ENCODE measurements at regions of chr4 and their contacts with region 1.

Region 1: GRCh38 chr4:22897520-22898108 is 204.9 kb downstream of the GBA3 start:
- DNase-seq: peak; percentile 30
- H3K4me3 ChIP-seq: no peak overlapping the region; a peak in 1 of 4 replicates
- H3K27ac ChIP-seq: no peak overlapping the region
- H3K4me1 ChIP-seq: no peaks in the 10 kb centered on the region
- H3K27me3 ChIP-seq: no peaks in the 10 kb centered on the region
- CTCF ChIP-seq: peak; percentile 90
- EP300 ChIP-seq: no peak
- RAD21 ChIP-seq: peak; percentile 43

Region 2: DNA sequence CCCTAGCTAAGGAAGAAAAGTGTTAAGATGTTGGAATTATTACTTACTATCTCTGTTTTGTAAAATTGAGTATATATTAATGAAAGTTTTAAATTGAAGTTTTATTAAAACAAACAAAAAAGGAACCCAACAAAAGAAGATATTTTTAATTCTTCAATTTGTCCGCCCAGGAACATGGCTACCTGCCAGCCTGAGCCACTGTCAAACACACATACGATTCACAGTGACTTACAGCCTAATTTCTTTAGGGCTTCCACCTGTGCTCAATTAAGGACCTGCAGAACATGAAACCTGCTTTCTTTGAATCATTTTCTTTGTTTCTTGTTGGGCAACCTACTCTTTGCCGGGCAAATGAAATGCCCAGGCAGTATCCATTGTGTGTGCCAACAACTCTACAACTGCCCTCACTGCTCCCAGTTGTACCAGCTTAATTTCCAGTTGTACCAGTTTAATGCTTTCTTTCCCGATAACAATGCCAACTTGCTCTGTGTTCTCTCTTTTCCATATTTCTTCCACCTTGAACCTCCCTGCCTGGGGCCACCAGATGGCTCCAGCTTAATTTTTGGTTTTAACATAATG is 23.2 kb before region 1 on chr4:
- CTCF ChIA-PET with region 1: interaction called, 15 read pairs
- POLR2A ChIA-PET with region 1: no interaction called
- DNase-seq: no peak
- H3K4me3 ChIP-seq: no peak overlapping the region
- H3K27ac ChIP-seq: no peak overlapping the region
- H3K4me1 ChIP-seq: no peaks in the 10 kb centered on the region
- H3K27me3 ChIP-seq: no peaks in the 10 kb centered on the region
- CTCF ChIP-seq: no peak
- EP300 ChIP-seq: no peak
- RAD21 ChIP-seq: no peak

Region 3: GRCh38 chr4:22881411-22881810 is 16.2 kb before region 1 on chr4:
- CTCF ChIA-PET with region 1: interaction called, 15 read pairs
- POLR2A ChIA-PET with region 1: no interaction called
- DNase-seq: no peak
- H3K4me3 ChIP-seq: no peak overlapping the region
- H3K27ac ChIP-seq: no peak overlapping the region
- H3K4me1 ChIP-seq: no peaks in the 10 kb centered on the region
- H3K27me3 ChIP-seq: no peaks in the 10 kb centered on the region
- CTCF ChIP-seq: no peak
- EP300 ChIP-seq: no peak
- RAD21 ChIP-seq: no peak

Region 4: GRCh38 chr4:22911285-22911684 is 13.7 kb after region 1 on chr4:
- CTCF ChIA-PET with region 1: interaction called, 16 read pairs
- POLR2A ChIA-PET with region 1: no interaction called
- DNase-seq: no peak
- H3K4me3 ChIP-seq: no peak overlapping the region
- H3K27ac ChIP-seq: no peak overlapping the region
- H3K4me1 ChIP-seq: no peaks in the 10 kb centered on the region
- H3K27me3 ChIP-seq: no peaks in the 10 kb centered on the region
- CTCF ChIP-seq: no peak
- EP300 ChIP-seq: no peak
- RAD21 ChIP-seq: no peak

Region 5: GRCh38 chr4:23084559-23085248 is 187.1 kb after region 1 on chr4:
- CTCF ChIA-PET with region 1: no interaction called
- POLR2A ChIA-PET with region 1: no interaction called
- DNase-seq: no peak
- H3K4me3 ChIP-seq: no peak overlapping the region
- H3K27ac ChIP-seq: no peak overlapping the region
- H3K4me1 ChIP-seq: no peaks in the 10 kb centered on the region
- H3K27me3 ChIP-seq: no peaks in the 10 kb centered on the region
- CTCF ChIP-seq: no peak
- EP300 ChIP-seq: no peak
- RAD21 ChIP-seq: no peak